ENCODE measurements at regions of chr15 and their contacts with region 1.

Region 1: GRCh38 chr15:73425510-73425909 is 17.5 kb upstream of the REC114 start:
- DNase-seq: no peak
- H3K4me3 ChIP-seq: no peak overlapping the region
- H3K27ac ChIP-seq: no peak overlapping the region
- H3K4me1 ChIP-seq: no peaks in the 10 kb centered on the region
- H3K27me3 ChIP-seq: no peaks in the 10 kb centered on the region; the same call in 1 of the 2 replicates
- CTCF ChIP-seq: no peak

Region 2: DNA sequence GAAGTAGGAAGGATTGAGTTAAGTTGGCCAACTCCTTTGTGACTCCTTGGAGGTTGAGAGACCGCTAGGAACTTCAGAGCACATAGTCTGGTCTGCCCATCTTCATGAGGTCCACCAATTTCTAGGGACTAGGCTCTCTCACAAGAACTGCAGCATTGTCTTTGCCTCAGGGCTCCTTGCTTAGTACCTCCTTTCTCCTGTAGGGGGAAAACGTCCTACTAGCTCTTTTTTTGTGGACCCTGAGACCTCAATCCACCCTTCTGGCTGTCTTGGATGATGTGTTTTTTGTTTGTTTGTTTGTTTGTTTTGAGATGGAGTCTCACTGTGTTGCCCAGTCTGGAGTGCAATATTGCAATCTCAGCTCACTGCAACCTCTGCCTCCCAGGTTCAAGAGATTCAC is 39.1 kb after region 1 on chr15:
- CTCF ChIA-PET with region 1: no interaction called
- POLR2A ChIA-PET with region 1: interaction called, 30 read pairs
- intact Hi-C with region 1: no loop called
- DNase-seq: no peak
- H3K4me3 ChIP-seq: no peak overlapping the region
- H3K27ac ChIP-seq: no peak overlapping the region
- H3K4me1 ChIP-seq: no peaks in the 10 kb centered on the region
- H3K27me3 ChIP-seq: no peaks in the 10 kb centered on the region
- CTCF ChIP-seq: peak; percentile 31; the same call in 1 of the 2 replicates

Region 3: DNA sequence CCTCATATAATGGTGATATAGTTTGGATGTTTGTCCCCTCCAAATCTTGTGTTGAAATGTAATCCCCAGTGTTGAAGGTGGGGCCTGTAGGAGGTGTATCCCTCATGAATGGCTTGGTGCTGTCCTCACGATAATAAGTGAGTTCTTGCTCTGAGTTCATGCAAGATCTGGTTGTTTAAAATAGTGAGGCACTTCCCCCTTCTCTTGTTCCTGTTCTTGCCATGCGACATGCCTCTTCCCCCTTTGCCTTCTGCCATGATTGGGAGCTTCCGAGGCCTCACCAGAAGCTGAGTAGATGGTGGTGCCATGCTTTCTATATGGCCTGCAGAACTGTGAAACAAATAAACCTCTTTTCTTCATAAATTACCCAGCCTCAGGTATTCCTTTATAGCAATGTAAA is 56.7 kb after region 1 on chr15:
- CTCF ChIA-PET with region 1: no interaction called
- POLR2A ChIA-PET with region 1: no interaction called
- intact Hi-C with region 1: no loop called
- DNase-seq: no peak
- H3K4me3 ChIP-seq: no peak overlapping the region
- H3K27ac ChIP-seq: no peak overlapping the region
- H3K4me1 ChIP-seq: peaks cover 12% of the 10 kb centered on the region
- H3K27me3 ChIP-seq: no peaks in the 10 kb centered on the region
- CTCF ChIP-seq: no peak